ENCODE measurements at regions of chrX and their contacts with region 1.

Region 1: DNA sequence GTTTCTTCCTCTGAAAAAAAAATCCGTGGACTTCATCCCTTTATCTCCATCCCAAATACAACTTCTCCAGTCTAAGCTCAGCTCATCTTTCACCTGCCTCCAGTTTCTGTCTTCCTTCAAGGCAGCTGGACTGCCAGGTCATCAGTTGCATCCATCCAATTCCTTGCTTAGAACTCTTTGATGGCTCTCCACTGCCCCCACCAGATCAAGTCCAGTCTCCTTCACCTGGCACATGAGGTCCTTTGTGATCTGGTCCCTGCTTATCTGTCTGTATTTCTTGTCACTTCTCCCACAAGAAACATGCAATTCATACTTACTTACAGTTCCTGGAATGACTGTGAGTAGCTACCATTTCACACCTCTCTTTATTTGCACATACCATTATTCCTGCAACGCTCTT is 33.8 kb downstream of the OTUD6A start:
- DNase-seq: no peak
- ATAC-seq: no peak
- H3K4me3 ChIP-seq: no peak overlapping the region
- H3K4me3 Mint-ChIP-seq: no peak overlapping the region
- H3K27ac ChIP-seq: no peak overlapping the region
- H3K27ac Mint-ChIP-seq: no peak overlapping the region
- H3K4me1 ChIP-seq: no peaks in the 10 kb centered on the region
- H3K4me1 Mint-ChIP-seq: no peaks in the 10 kb centered on the region
- H3K27me3 ChIP-seq: peaks cover 0 to 5% of the 10 kb centered on the region in 2 experiments
- H3K27me3 Mint-ChIP-seq: peaks cover 11 to 31% of the 10 kb centered on the region in 2 donors

Region 2: GRCh38 chrX:69538321-69538876 is 557.7 kb before region 1 on chrX:
- CTCF ChIA-PET with region 1: interaction called, 9 to 11 read pairs
- POLR2A ChIA-PET with region 1: no interaction called
- DNase-seq: peak; percentile 5 to 74 (median 55)
- ATAC-seq: peak; percentile 84 to 91 (median 86)
- H3K4me3 ChIP-seq: peak overlapping the region; percentile 1 to 31
- H3K4me3 Mint-ChIP-seq: peak overlapping the region; percentile 28 to 65 (median 49)
- H3K27ac ChIP-seq: no peak overlapping the region
- H3K27ac Mint-ChIP-seq: no peak overlapping the region
- H3K4me1 ChIP-seq: peaks cover 0 to 15% of the 10 kb centered on the region in 2 experiments
- H3K4me1 Mint-ChIP-seq: peaks cover 10 to 16% (median 12%) of the 10 kb centered on the region in 3 donors
- H3K27me3 ChIP-seq: peaks cover 0 to 7% of the 10 kb centered on the region in 2 experiments
- H3K27me3 Mint-ChIP-seq: peaks cover 7 to 36% of the 10 kb centered on the region in 2 donors

Region 3: DNA sequence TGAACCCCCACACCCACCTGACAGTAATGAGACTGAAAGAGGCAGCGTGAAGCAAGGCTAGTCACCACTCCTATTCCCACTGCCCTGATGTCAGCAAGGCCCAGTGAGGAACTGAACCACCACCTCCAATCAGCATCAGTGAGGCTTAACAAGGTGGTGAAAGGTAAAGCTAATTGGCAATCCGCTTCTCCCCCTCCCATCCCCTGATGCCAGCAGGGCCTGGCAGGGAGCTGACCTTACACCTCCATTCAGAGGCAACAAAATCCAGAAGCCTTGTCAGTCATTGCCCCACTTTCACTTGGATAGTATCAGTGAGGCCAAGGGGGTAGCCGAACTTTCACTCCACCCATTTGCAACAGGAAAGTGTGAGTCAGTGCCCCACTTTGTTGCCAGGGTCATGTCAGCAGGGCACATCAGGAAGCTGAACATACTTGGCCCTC is 107.1 kb before region 1 on chrX:
- CTCF ChIA-PET with region 1: no interaction called
- POLR2A ChIA-PET with region 1: no interaction called
- DNase-seq: peak in 3 of 35 experiments; percentile 0 to 4 (median 0)
- ATAC-seq: peak in 2 of 4 experiments; percentile 56
- H3K4me3 ChIP-seq: no peak overlapping the region
- H3K4me3 Mint-ChIP-seq: no peak overlapping the region
- H3K27ac ChIP-seq: peak overlapping the region; percentile 28
- H3K27ac Mint-ChIP-seq: no peak overlapping the region
- H3K4me1 ChIP-seq: no peaks in the 10 kb centered on the region
- H3K4me1 Mint-ChIP-seq: peaks cover 0 to 12% (median 0%) of the 10 kb centered on the region in 3 donors
- H3K27me3 ChIP-seq: no peaks in the 10 kb centered on the region
- H3K27me3 Mint-ChIP-seq: peaks cover 0 to 4% of the 10 kb centered on the region in 2 donors

Region 4: DNA sequence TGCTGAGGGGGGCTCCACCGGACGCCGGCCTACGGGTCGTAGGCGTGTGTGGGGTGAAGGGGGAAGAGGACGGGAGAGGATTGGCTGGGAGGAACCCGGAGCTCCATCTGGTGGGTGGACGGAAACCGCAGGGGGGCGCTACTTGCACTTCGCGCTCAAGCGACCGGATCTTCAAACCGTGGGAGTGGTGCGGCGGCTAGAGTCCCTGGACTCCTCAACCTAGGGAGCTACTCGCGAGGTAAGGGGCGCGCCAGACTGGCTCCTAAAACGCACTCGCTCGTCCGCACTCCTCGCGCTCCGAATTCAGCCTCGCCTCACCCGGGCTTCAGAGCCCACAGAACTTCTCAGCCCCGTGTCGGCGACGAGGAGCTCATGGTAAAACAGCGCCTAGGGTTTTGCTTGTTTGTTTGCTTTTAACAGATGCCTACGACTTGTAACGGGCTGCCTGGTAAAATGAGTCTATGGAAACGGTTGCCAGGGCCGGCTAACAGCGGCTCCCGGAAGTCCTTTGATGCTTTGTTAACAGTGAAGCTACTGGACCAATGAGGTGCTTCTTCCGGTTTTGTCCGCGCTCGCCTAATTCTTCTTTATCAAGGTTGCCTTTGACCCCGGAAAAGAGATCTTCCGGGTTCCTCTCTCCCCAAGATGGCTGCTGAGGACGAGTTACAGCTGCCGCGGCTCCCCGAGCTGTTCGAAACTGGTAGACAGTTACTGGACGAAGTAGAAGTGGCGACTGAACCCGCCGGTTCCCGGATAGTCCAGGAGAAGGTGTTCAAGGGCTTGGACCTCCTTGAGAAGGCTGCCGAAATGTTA is 37.5 kb after region 1 on chrX and contains the start of gene IGBP1:
- CTCF ChIA-PET with region 1: no interaction called
- POLR2A ChIA-PET with region 1: no interaction called
- DNase-seq: peak; percentile 40 to 90 (median 79)
- ATAC-seq: peak; percentile 86 to 89 (median 86)
- H3K4me3 ChIP-seq: peak within 1 kb of the TSS; percentile 77 to 90
- H3K4me3 Mint-ChIP-seq: peak within 1 kb of the TSS; percentile 86 to 98 (median 98)
- H3K27ac ChIP-seq: peak within 1 kb of the TSS; percentile 83
- H3K27ac Mint-ChIP-seq: peak within 1 kb of the TSS; percentile 97
- H3K4me1 ChIP-seq: peaks cover 10 to 17% of the 10 kb centered on the region in 2 experiments
- H3K4me1 Mint-ChIP-seq: peaks cover 26 to 47% (median 28%) of the 10 kb centered on the region in 3 donors
- H3K27me3 ChIP-seq: no peaks in the 10 kb centered on the region
- H3K27me3 Mint-ChIP-seq: peaks cover 0 to 11% of the 10 kb centered on the region in 2 donors
- total RNA-seq, gene IGBP1: 50.8 to 61.2 (median 59.1) TPM

Region 5: GRCh38 chrX:70226048-70226447 is 130.0 kb after region 1 on chrX:
- CTCF ChIA-PET with region 1: no interaction called
- POLR2A ChIA-PET with region 1: no interaction called
- DNase-seq: no peak
- ATAC-seq: no peak
- H3K4me3 ChIP-seq: no peak overlapping the region
- H3K4me3 Mint-ChIP-seq: no peak overlapping the region
- H3K27ac ChIP-seq: no peak overlapping the region
- H3K27ac Mint-ChIP-seq: no peak overlapping the region
- H3K4me1 ChIP-seq: no peaks in the 10 kb centered on the region
- H3K4me1 Mint-ChIP-seq: no peaks in the 10 kb centered on the region
- H3K27me3 ChIP-seq: no peaks in the 10 kb centered on the region
- H3K27me3 Mint-ChIP-seq: peaks cover 0 to 8% of the 10 kb centered on the region in 2 donors